Posterior vena cava (tissue), 2 donors: ENCODE measurements at regions of chr12 and their contacts with region 1.

Region 1: DNA sequence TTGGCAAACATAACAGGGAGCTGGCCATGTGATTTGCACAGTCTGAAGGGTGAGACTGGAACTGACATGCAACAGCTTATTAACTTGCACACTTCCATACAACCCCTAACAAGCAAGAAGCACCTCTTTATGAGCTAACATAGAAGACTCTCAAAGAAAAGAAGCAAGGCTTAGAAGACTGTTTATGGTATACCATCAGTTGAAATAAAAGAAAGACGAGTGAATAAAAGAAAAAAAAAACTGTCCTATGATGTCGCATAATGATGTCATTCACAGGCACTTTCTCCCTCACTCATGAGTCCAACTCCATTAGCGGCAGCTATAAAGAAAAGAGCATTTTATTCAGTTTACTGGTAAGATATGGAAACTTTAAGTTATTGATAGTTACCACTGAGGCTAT is 3.3 kb upstream of the MDM1 start:
- DNase-seq: no peak

Region 2: GRCh38 chr12:68378872-68379782 is 43.7 kb after region 1 on chr12:
- intact Hi-C with region 1: loop called in 1 of 2 experiments (anchors 1 kb)
- DNase-seq: no peak